ENCODE measurements at regions of chr3 and their contacts with region 1.

Region 1: DNA sequence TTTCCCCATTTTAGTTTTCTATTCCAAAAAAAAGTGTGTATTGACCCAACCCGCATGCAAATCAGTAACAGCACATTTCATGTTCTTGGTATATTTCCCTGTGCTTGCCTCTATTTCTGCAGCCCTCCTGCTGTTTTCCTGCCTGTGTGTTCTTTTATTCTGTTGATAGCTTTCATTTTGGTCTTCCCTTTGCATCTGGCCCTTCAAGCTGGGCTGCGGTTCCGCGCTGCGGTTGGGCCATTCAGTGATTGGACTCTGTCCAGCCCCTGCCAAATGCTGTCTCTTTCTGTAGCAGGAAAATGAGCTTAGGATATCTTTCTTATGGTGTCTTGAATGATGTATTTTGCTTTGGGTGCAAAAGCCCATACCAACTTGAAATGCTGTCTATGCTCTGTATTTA is 49.9 kb downstream of the ZNF621 start:
- DNase-seq: no peak
- H3K4me3 ChIP-seq: no peak overlapping the region
- H3K27ac ChIP-seq: no peak overlapping the region
- H3K4me1 ChIP-seq: no peaks in the 10 kb centered on the region
- H3K27me3 ChIP-seq: no peaks in the 10 kb centered on the region
- CTCF ChIP-seq: no peak
- POLR2A ChIP-seq: no peak

Region 2: GRCh38 chr3:40317061-40317855 is 257.4 kb before region 1 on chr3:
- intact Hi-C with region 1: loop called in 1 of 2 experiments (anchors 10 kb)
- DNase-seq: peak in 5 of 7 donors; percentile 28 to 68 (median 50)
- H3K4me3 ChIP-seq: no peak overlapping the region
- H3K27ac ChIP-seq: no peak overlapping the region
- H3K4me1 ChIP-seq: peaks cover 0 to 21% of the 10 kb centered on the region in 2 donors
- H3K27me3 ChIP-seq: no peaks in the 10 kb centered on the region
- CTCF ChIP-seq: peak; percentile 77 to 91 (median 85)
- POLR2A ChIP-seq: no peak

Measured in adrenal gland (tissue), 19 donors.